Activated CD8-positive, alpha-beta T cell treated with anti-CD3 and anti-CD28 coated beads, Interleukin-2, amount 10 ng/mL, durations not matched to agents 7 days and 5 days (primary cell): ENCODE measurements at regions of chr22 and their contacts with region 1.

Region 1: DNA sequence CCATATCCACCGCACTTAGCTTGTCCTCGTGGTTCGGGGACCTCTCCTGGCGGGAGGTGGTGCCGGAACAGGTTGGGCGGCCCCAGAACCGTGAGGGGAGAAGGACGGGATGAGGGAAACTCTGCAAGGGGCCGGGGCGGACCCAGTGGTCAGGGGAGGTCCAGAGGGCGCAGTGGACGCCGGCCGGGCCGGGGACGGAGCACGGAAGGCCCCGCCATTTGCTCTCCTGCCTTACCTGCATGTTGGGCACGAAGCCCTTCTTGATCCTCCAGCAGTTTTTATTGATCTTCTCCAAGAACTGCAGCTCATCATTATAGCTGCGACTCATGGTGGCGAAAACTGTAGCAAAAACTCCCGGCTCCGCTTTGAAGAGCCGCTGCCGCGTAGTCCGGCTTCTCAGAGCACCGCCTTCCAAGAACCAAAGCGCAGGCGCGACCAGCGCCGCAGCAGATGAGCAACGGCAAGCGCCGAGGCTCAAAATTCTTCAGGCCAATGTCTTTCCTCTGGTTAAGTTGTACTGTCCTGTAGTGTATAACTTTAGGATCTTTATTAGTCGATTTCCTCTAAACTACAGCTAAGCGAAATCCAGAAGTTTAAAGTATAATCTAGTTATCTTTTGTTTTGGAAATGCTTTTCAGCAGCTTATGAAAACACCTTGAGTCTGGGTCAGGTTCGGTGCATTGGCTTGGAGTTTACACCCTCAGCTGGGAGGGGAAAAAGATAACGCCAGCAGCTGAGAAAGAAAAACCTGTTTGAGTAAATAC is at the start of gene RTCB:
- DNase-seq: peak; percentile 93
- ATAC-seq: peak; percentile 89
- H3K4me3 Mint-ChIP-seq: peak within 1 kb of the TSS; percentile 94
- H3K27ac Mint-ChIP-seq: peak within 1 kb of the TSS; percentile 93
- H3K4me1 Mint-ChIP-seq: peaks cover 41% of the 10 kb centered on the region
- H3K27me3 Mint-ChIP-seq: peaks cover 2% of the 10 kb centered on the region
- total RNA-seq, gene RTCB: 59.0 to 60.2 TPM

Region 2: GRCh38 chr22:32389685-32390084 is 22.3 kb before region 1 on chr22:
- CTCF ChIA-PET with region 1: interaction called, 11 read pairs
- POLR2A ChIA-PET with region 1: no interaction called
- DNase-seq: peak; percentile 42
- ATAC-seq: no peak
- H3K4me3 Mint-ChIP-seq: no peak overlapping the region
- H3K27ac Mint-ChIP-seq: no peak overlapping the region
- H3K4me1 Mint-ChIP-seq: no peaks in the 10 kb centered on the region
- H3K27me3 Mint-ChIP-seq: no peaks in the 10 kb centered on the region

Region 3: GRCh38 chr22:32401486-32401885 is 10.5 kb before region 1 on chr22:
- CTCF ChIA-PET with region 1: interaction called, 13 read pairs
- POLR2A ChIA-PET with region 1: interaction called, 6 read pairs
- DNase-seq: no peak
- ATAC-seq: no peak
- H3K4me3 Mint-ChIP-seq: no peak overlapping the region
- H3K27ac Mint-ChIP-seq: no peak overlapping the region
- H3K4me1 Mint-ChIP-seq: no peaks in the 10 kb centered on the region
- H3K27me3 Mint-ChIP-seq: no peaks in the 10 kb centered on the region

Region 4: DNA sequence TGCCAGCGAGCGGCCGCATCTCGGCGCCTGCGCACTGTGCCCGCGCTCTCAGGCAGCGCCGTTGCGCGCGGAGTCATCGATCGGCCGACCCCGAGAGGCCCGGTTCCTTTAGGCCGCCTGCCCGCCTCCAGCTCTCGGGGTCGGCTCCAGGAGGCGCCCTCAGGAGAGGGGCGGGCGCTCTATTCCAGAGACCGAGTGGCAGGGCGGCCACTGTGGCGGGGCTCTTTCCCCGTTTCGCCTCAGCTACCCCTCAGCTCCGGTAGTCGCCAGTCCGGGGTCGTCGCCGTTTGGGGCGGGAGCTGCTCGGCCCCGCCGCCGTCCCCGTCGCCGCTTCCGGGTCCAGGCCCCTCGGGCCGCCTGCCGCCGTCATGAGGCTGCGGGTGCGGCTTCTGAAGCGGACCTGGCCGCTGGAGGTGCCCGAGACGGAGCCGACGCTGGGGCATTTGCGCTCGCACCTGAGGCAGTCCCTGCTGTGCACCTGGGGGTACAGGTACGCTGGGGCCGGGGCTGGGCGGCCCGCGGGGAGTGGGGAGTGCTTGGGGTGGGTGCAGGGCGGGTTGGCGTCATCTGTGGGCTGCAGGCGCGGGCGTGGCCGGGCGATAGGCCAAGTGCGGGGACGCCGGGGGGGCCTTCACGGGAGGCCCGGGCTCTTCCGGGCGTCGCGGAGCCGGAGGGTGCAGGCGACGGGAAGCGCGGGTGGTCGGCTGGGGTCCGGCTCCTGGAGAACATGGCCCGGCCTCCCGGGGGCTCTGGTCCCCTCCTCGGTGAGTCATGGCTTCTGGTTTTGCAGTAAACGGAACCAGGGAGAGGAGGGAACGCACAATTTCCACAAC is 62.8 kb after region 1 on chr22 and contains the start of gene FBXO7:
- CTCF ChIA-PET with region 1: interaction called, 43 read pairs
- POLR2A ChIA-PET with region 1: interaction called, 43 read pairs
- DNase-seq: peak; percentile 90
- ATAC-seq: peak; percentile 88
- H3K4me3 Mint-ChIP-seq: peak within 1 kb of the TSS; percentile 95
- H3K27ac Mint-ChIP-seq: peak within 1 kb of the TSS; percentile 95
- H3K4me1 Mint-ChIP-seq: peaks cover 22% of the 10 kb centered on the region
- H3K27me3 Mint-ChIP-seq: no peaks in the 10 kb centered on the region
- total RNA-seq, gene FBXO7: 84.0 to 90.0 TPM

Region 5: DNA sequence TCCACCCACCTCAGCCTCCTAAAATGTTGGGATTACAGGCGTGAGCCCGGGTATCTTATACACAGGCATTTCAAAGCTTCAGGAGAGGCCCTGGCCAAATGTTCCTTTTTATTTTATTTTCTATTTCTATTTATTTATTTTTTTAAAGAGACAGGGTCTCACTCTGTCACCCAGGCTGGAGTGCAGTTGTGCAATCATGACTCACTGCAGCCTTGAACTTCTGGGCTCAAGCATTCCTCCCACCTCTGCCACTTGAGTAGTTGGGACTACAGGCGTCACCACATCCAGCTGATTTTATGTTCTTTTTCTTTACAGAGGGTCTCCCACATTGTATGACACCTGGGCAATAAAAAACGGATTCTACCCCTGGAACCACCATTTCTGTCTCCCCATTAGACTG is 133.8 kb after region 1 on chr22:
- CTCF ChIA-PET with region 1: no interaction called
- POLR2A ChIA-PET with region 1: no interaction called
- DNase-seq: no peak
- ATAC-seq: no peak
- H3K4me3 Mint-ChIP-seq: no peak overlapping the region
- H3K27ac Mint-ChIP-seq: no peak overlapping the region
- H3K4me1 Mint-ChIP-seq: no peaks in the 10 kb centered on the region
- H3K27me3 Mint-ChIP-seq: peaks cover 5% of the 10 kb centered on the region